Heart left ventricle (tissue), 16 donors: ENCODE measurements at regions of chr2 and their contacts with region 1.

Region 1: DNA sequence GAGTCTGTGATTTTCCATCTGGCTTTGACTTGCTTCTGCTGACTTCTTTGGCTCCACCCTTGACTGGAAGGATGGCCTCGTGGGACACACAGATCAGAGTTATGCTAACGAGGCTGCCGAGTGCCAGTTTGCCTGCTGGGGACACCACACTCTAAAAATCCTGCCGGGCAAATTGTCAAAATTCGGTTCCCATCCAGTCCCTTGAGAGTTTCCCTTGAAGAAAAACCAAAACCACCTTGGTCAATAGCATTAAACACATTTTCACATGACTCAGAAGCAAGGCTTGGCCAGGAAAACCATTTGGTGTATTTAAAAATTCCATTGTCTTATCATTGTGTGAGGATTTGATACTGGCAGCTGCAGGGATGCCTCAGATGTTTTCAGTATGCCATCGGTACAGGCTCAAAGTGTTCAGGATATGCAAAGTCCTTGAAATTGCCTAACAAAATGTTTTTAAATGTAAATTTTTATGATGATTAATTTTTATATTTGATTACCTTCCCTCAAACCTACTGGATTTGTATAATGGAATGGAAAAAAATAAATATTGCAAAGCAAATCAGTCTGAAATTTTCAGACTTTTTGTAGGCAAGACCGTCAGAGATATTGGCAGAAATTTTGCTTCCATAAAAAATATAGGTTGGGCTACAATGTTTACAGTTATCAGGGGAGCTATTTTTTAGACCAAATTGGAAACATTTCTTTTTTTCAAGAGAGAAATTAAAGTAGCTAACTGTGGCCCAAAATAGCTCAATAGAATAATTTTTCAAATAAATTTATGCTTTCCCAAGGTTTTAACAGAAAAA is 41.6 kb downstream of the KCNE4 start:
- DNase-seq: peak; percentile 59 to 77 (median 68)
- ATAC-seq: peak; percentile 74 to 86 (median 80)
- H3K4me3 ChIP-seq: no peak overlapping the region
- H3K27ac ChIP-seq: peak overlapping the region in 10 of 12 donors; percentile 16 to 74 (median 52)
- H3K4me1 ChIP-seq: peaks cover 0 to 18% (median 8%) of the 10 kb centered on the region in 12 donors
- H3K27me3 ChIP-seq: no peaks in the 10 kb centered on the region
- CTCF ChIP-seq: peak in 1 of 12 donors; percentile 17
- POLR2A ChIP-seq: no peak

Region 2: DNA sequence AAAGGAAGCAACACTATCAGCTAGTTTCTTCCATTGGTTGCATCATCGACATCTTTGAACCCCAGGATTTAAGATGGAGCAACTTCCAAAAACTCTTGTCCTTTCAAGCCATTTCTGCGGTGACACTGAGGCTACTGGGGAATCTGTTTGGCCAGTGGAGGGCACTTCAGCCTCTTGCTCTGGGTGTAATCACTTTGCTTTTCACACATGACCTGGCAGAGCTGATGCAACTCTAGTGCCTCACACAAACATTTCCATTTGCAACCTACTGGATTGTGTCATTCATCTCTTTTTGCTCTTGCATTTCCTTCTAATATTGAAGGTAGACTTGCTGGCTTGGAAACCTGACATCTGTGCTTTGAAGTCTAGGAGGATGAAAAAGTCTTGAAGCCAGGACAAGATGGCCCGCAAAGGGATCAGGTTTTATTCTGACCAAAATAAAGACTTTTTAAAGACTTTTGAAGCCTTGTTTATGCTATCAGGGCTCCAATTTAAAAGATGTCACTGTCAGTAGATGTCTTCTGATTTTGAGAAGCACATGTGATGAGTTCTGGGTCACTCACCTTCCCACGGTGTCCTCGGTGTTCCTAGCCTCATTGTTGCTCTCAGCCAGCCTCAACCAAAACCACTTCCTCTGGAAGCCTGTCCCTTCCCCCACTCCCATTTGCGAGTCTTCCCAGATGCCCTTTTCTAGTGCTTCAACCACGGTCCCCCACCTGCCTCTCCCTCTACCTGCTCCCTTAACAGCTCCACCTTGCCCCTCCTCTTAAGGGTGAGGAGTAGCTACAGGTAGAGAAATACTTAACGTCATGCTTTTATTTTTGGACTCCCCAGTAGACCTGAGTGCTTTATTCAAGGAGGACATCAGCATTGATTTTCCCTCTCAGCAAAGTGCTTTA is 111.4 kb before region 1 on chr2:
- intact Hi-C with region 1: loop called in 1 of 10 experiments (anchors 5 kb)
- DNase-seq: peak in 4 of 5 donors; percentile 33 to 61 (median 42)
- ATAC-seq: peak; percentile 78 to 95 (median 92)
- H3K4me3 ChIP-seq: no peak overlapping the region
- H3K27ac ChIP-seq: no peak overlapping the region
- H3K4me1 ChIP-seq: peaks cover 0 to 8% (median 0%) of the 10 kb centered on the region in 12 donors
- H3K27me3 ChIP-seq: no peaks in the 10 kb centered on the region
- CTCF ChIP-seq: peak in 11 of 12 donors; percentile 19 to 70 (median 58)
- POLR2A ChIP-seq: no peak

Region 3: GRCh38 chr2:223051693-223052289 is 41.8 kb before region 1 on chr2 and contains the start of gene KCNE4:
- intact Hi-C with region 1: loop called in 1 of 10 experiments (anchors 5 kb)
- DNase-seq: peak in 2 of 5 donors; percentile 37 to 39
- ATAC-seq: peak in 2 of 4 donors; percentile 19 to 32
- H3K4me3 ChIP-seq: peak within 1 kb of the TSS; percentile 5 to 66 (median 52)
- H3K27ac ChIP-seq: peak within 1 kb of the TSS; percentile 62 to 86 (median 75)
- H3K4me1 ChIP-seq: peaks cover 0 to 48% (median 18%) of the 10 kb centered on the region in 12 donors
- H3K27me3 ChIP-seq: no peaks in the 10 kb centered on the region
- CTCF ChIP-seq: no peak
- POLR2A ChIP-seq: peak in 1 of 2 donors; percentile 51
- total RNA-seq, gene KCNE4: 0.69 to 3.7 (median 1.6) TPM

Region 4: DNA sequence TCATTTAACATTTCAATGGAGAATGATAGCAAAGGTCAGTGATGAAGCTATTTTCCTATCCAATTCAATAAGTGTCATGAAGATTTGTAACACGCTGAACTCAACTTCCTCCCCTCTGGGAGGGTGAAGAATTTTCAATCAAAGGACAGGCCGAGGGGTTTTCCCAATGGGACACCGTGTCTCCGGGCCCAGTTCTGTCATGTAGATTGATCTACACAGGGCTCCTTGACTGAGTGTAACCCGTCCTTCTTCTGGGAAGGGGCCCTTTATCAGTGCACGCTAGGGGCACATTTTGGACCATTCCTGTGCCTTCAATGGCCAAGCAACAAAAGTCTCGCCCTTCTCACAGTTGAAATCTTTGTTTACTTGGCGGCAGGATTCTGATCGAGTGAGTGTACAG is 48.5 kb after region 1 on chr2:
- intact Hi-C with region 1: loop called in 1 of 10 experiments (anchors 2 kb)
- DNase-seq: no peak
- ATAC-seq: no peak
- H3K4me3 ChIP-seq: no peak overlapping the region
- H3K27ac ChIP-seq: no peak overlapping the region
- H3K4me1 ChIP-seq: no peaks in the 10 kb centered on the region
- H3K27me3 ChIP-seq: peaks cover 0 to 3% (median 0%) of the 10 kb centered on the region in 9 donors
- CTCF ChIP-seq: no peak
- POLR2A ChIP-seq: no peak

Region 5: DNA sequence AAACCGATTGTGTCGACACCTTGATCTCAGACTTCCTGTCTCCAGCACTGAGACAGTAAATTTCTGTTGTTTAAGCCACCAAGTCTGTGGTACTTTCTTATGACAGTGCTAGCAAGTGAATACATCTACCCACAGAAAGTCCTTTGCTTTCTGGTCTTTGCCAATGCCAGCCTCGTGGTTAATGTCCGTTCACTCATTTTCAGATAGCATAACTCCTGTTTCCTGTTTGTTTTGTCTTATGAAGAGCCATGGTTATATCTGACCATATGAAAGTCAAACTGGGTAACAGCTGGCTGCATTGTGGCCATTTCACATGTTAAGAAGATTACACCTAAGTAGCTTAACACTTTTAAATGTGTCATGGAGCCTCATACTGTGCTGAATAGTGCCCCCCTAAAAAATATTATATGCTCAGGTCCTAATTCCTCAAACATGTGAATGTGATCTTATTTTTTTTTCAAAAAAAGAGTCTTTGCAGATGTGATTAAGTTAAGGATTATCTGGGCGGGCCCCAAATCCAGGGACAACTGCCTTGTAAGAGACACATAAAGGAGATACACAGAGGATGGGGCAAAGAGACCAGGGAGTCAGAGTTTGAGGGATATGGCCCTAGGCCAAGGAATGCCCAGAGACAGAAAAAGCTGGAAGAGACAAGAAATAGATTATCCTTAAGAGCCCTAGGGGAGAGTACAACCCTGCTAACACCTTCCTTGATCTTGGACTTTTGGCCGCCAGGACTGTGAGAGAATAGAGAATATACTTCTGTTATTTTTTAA is 76.4 kb after region 1 on chr2:
- intact Hi-C with region 1: no loop called
- DNase-seq: no peak
- ATAC-seq: no peak
- H3K4me3 ChIP-seq: no peak overlapping the region
- H3K27ac ChIP-seq: no peak overlapping the region
- H3K4me1 ChIP-seq: no peaks in the 10 kb centered on the region
- H3K27me3 ChIP-seq: no peaks in the 10 kb centered on the region
- CTCF ChIP-seq: no peak
- POLR2A ChIP-seq: no peak